ENCODE measurements at regions of chr2 and their contacts with region 1.

Region 1: GRCh38 chr2:86623651-86624541 is at the start of gene RNF103:
- DNase-seq: peak; percentile 95
- H3K4me3 Mint-ChIP-seq: peak within 1 kb of the TSS; percentile 95
- H3K27ac Mint-ChIP-seq: peak within 1 kb of the TSS; percentile 92
- H3K4me1 Mint-ChIP-seq: peaks cover 32% of the 10 kb centered on the region
- H3K27me3 Mint-ChIP-seq: peaks cover 4% of the 10 kb centered on the region
- total RNA-seq, gene RNF103: 12.3 to 13.1 TPM

Region 2: GRCh38 chr2:86562922-86563649 is 60.8 kb before region 1 on chr2 and contains the start of gene CHMP3:
- CTCF ChIA-PET with region 1: no interaction called
- POLR2A ChIA-PET with region 1: interaction called, 11 read pairs
- intact Hi-C with region 1: loop called (anchors 1 kb)
- DNase-seq: peak; percentile 98
- H3K4me3 Mint-ChIP-seq: peak within 1 kb of the TSS; percentile 94
- H3K27ac Mint-ChIP-seq: peak within 1 kb of the TSS; percentile 98
- H3K4me1 Mint-ChIP-seq: peaks cover 27% of the 10 kb centered on the region
- H3K27me3 Mint-ChIP-seq: no peaks in the 10 kb centered on the region
- total RNA-seq, gene CHMP3: 36.5 to 38.6 TPM